ENCODE measurements at regions of chr2 and their contacts with region 1.

Region 1: DNA sequence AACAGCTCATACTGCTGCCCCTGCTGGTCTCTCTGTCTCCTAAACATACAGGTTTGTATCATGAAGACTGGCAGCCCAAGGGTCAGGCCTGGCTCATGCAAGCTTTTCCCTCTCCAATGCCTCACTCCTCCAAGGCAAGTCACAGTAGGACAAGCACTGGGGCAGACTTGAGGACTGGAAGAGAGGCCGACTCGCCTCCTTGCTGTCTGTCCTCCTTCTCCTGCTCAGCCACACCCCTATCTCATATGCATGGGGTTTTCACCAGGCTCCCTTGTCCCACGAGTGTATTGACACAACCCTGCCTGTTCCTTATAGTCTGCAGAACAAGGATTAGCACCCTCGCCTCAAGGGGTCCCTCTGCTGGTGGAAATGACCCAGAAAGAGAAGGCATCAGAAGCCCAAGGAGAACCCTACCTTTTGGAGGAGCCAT is 223.7 kb downstream of the SOX11 start:
- DNase-seq: peak; percentile 12
- H3K4me3 ChIP-seq: no peak overlapping the region
- CTCF ChIP-seq: peak; percentile 63

Region 2: GRCh38 chr2:5691975-5692529 is 223.8 kb before region 1 on chr2 and contains the start of gene SOX11:
- CTCF ChIA-PET with region 1: interaction called, 37 read pairs
- POLR2A ChIA-PET with region 1: interaction called, 20 read pairs
- DNase-seq: peak; percentile 59
- H3K4me3 ChIP-seq: peak within 1 kb of the TSS; percentile 80
- CTCF ChIP-seq: no peak

Region 3: DNA sequence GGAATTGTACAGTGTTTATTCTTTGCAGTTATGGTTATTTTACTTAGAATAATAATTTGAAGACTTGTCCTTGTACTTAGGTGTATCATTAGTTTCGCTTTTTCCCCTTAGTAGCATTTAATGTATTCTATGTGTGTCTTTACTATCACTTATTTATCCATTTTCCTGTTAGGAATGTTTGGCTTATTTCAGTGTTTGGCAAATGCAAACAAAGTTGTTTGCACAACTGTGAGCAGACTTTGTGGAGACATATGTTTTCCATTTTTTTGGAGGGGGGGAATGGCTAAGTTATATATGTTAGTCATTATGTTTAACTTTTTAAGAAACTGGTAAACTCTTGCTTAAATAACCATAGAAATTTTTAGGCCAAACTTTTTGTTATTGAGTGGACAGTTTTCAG is 224.0 kb after region 1 on chr2:
- CTCF ChIA-PET with region 1: no interaction called
- POLR2A ChIA-PET with region 1: no interaction called
- DNase-seq: no peak
- H3K4me3 ChIP-seq: no peak overlapping the region
- CTCF ChIP-seq: no peak

Measured in AG04449 (cell line).